ENCODE measurements at regions of chr17 and their contacts with region 1.

Region 1: DNA sequence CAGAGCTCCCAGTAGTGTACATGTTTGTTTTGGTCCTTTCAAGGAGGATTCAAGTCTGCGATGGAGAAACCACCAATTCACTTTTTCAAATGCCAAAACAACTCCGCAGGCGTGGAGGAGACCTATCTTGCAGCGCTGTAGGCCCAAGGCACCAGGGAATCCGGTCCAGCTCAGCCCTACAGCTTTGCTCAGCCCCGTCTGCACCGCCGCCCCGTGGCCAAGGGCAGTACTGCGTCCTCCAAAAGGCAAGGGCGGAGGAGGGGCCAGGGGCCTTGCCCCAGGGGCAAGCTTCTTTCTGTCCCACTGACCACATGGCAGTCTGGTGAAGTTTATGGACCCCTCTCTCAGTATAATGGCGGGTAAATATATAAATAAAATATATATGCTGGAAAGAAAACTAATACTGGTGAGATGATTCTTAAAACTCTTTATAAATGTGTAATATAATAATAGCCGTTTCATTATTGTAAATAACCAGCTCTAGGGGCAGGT is 709 bp upstream of the CD300LG start:
- DNase-seq: peak; percentile 98
- ATAC-seq: peak; percentile 97
- H3K4me3 Mint-ChIP-seq: no peak overlapping the region
- H3K27ac Mint-ChIP-seq: no peak overlapping the region
- H3K4me1 Mint-ChIP-seq: peaks cover 16% of the 10 kb centered on the region
- H3K27me3 Mint-ChIP-seq: peaks cover 5% of the 10 kb centered on the region
- CTCF ChIP-seq: peak; percentile 95

Region 2: GRCh38 chr17:43524945-43525575 is 321.2 kb before region 1 on chr17:
- CTCF ChIA-PET with region 1: no interaction called
- POLR2A ChIA-PET with region 1: no interaction called
- DNase-seq: no peak
- ATAC-seq: no peak
- H3K4me3 Mint-ChIP-seq: no peak overlapping the region
- H3K27ac Mint-ChIP-seq: peak overlapping the region; percentile 80; the same call in 1 of the 2 replicates
- H3K4me1 Mint-ChIP-seq: peaks cover 49% of the 10 kb centered on the region
- H3K27me3 Mint-ChIP-seq: no peaks in the 10 kb centered on the region
- CTCF ChIP-seq: no peak

Region 3: GRCh38 chr17:43760254-43760852 is 85.9 kb before region 1 on chr17:
- CTCF ChIA-PET with region 1: interaction called, 41 read pairs
- POLR2A ChIA-PET with region 1: no interaction called
- DNase-seq: peak; percentile 99
- ATAC-seq: peak; percentile 81
- H3K4me3 Mint-ChIP-seq: peak overlapping the region; percentile 28
- H3K27ac Mint-ChIP-seq: no peak overlapping the region
- H3K4me1 Mint-ChIP-seq: peaks cover 36% of the 10 kb centered on the region
- H3K27me3 Mint-ChIP-seq: peaks cover 18% of the 10 kb centered on the region
- CTCF ChIP-seq: peak; percentile 94

Region 4: GRCh38 chr17:43791589-43791988 is 54.7 kb before region 1 on chr17:
- CTCF ChIA-PET with region 1: interaction called, 66 read pairs
- POLR2A ChIA-PET with region 1: interaction called, 3 read pairs
- DNase-seq: no peak
- ATAC-seq: peak; percentile 80
- H3K4me3 Mint-ChIP-seq: peak overlapping the region; percentile 32; the same call in 1 of the 2 replicates
- H3K27ac Mint-ChIP-seq: no peak overlapping the region
- H3K4me1 Mint-ChIP-seq: peaks cover 8% of the 10 kb centered on the region
- H3K27me3 Mint-ChIP-seq: peaks cover 27% of the 10 kb centered on the region
- CTCF ChIP-seq: no peak

Region 5: DNA sequence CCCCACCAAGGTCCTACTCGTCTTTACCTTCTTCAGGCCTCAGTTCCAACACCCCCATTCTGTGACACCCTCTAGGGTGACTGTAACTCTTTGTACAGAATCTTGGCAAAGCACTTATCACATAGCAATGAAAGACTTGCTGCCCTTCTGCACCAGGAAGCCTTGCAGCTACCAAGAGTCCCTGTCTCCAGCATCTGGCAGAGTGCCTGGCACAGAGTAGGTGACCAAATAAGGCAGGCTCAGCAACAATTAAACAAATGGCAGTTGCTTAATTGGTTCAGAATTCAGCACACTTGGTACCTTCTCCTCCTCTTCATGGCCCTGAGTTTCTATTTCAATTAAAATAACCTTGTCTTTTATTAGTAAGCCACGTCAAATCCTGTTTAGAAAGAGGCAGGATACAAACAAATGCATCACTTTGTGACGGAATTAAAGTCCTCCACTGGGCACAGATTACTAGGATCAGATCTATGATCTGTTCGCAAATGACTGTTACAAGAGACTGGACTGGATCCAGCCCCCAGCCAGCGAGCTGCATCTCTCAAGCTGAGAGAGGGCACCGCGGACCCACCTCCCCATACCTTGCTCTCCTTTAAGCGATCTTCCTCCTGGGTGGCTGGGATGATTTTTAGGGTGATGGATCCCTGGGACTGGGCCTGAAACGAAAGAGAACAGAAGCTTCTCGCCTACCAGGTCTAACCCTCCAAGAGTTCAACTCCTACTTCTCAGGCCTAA is 22.8 kb before region 1 on chr17:
- CTCF ChIA-PET with region 1: interaction called, 45 read pairs
- POLR2A ChIA-PET with region 1: interaction called, 4 read pairs
- DNase-seq: no peak
- ATAC-seq: no peak
- H3K4me3 Mint-ChIP-seq: no peak overlapping the region
- H3K27ac Mint-ChIP-seq: no peak overlapping the region
- H3K4me1 Mint-ChIP-seq: no peaks in the 10 kb centered on the region
- H3K27me3 Mint-ChIP-seq: no peaks in the 10 kb centered on the region
- CTCF ChIP-seq: no peak

Region 6: DNA sequence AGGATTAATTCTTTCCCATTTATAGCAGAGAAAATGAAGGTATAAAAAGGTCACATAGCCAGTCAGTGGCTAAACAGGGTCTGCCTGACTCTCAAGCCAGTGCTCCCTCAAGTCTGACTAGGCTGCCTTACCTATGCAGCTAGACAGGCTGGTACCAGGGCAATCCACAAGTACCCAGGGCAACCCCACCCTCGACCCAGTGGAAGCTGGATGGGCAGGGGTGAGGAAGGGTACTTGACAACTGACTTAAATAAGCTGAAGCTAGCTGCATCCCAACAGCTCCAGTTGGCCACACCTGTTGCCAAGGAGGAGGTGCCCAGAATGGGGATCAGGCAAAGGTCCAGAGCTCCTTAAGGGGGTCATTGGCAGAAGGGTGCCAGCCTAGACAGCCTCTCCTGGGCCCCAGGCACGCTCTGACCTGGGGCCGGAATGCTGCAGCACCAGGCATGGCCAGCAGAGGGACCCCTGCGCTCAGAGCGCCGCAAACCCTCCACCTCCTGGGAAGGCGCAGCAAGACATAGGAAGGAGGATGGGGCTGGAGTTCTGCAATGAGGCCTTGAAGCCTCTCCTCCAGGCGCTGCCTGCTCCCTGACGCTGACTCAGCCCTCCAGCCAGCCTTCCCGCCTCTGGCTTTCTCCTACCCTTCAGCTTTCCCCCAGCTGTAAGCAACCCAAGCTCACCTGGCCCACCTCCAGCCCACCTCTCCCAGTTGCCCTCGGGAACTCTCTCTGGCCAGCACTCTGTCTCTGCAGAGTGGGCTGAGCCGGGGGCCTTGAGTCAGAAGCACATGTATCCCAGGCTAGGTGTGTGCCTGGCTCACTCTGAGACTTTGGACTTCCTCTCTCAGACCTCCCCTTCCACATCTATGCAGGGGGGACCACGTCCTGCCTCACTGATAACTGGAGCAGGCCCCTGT is 32.3 kb after region 1 on chr17:
- CTCF ChIA-PET with region 1: interaction called, 18 read pairs
- POLR2A ChIA-PET with region 1: interaction called, 3 read pairs
- DNase-seq: peak; percentile 89
- ATAC-seq: peak; percentile 83
- H3K4me3 Mint-ChIP-seq: no peak overlapping the region
- H3K27ac Mint-ChIP-seq: no peak overlapping the region
- H3K4me1 Mint-ChIP-seq: peaks cover 14% of the 10 kb centered on the region
- H3K27me3 Mint-ChIP-seq: no peaks in the 10 kb centered on the region
- CTCF ChIP-seq: peak; percentile 91

Region 7: DNA sequence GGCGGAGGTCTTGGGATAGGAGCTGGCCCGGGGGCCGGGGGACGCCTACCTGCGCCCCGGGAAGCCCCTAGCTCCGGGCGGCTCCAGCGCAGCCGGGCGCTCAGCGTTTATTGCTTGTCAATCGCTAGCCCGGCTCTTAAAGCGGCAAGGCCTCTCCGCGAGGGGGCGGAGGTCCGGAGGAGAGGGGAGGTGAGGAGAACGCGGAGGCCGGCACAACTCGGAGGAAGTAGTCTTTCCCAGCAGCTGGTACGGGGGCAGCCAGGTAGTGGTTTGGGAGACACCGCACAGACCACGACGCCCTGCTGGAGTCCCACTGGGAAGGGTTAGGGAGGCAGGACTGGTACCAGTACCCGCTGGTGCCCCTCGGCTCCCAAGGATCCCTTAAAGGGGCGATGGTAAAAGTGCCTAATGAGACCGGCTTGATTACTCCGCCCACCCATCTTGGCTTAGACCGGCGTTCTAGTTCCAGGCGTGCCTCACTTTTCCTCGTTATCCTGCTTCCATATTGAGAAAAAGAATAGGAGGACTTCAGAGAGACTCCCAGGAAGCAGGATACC is 61.2 kb after region 1 on chr17 and contains the start of gene MPP2:
- CTCF ChIA-PET with region 1: interaction called, 17 read pairs
- POLR2A ChIA-PET with region 1: no interaction called
- DNase-seq: peak; percentile 88
- ATAC-seq: peak; percentile 16
- H3K4me3 Mint-ChIP-seq: peak within 1 kb of the TSS; percentile 90
- H3K27ac Mint-ChIP-seq: no peak within 1 kb of the TSS
- H3K4me1 Mint-ChIP-seq: peaks cover 26% of the 10 kb centered on the region
- H3K27me3 Mint-ChIP-seq: peaks cover 49% of the 10 kb centered on the region
- CTCF ChIP-seq: no peak
- total RNA-seq, gene MPP2: 29.3 to 31.4 TPM (median 29.9 TPM) in 3 replicates

Region 8: DNA sequence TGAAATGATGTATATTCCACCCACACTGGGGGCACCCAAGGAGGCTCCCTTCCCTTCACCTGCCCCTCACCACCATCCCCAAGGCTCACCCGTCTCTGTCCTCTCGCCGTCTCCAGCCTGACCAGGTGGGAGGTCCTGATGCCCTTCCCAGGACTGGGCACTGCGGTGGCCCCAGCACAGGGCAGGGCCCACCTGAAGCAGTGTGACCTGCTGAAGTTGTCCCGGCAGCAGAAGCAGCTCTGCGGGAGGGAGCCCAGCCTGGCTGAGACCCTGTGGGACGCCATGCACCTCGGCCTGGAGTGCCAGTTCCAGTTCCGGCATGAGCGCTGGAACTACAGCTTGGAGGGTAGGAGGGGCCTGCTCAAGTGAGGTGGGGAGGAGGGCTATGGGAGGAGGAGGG is 86.1 kb after region 1 on chr17:
- CTCF ChIA-PET with region 1: no interaction called
- POLR2A ChIA-PET with region 1: no interaction called
- DNase-seq: no peak
- ATAC-seq: no peak
- H3K4me3 Mint-ChIP-seq: no peak overlapping the region
- H3K27ac Mint-ChIP-seq: no peak overlapping the region
- H3K4me1 Mint-ChIP-seq: peaks cover 11% of the 10 kb centered on the region
- H3K27me3 Mint-ChIP-seq: peaks cover 43% of the 10 kb centered on the region
- CTCF ChIP-seq: no peak

Region 9: GRCh38 chr17:44095642-44096496 is 249.6 kb after region 1 on chr17:
- CTCF ChIA-PET with region 1: no interaction called
- POLR2A ChIA-PET with region 1: no interaction called
- DNase-seq: peak; percentile 85
- ATAC-seq: peak; percentile 86
- H3K4me3 Mint-ChIP-seq: peak overlapping the region; percentile 73
- H3K27ac Mint-ChIP-seq: peak overlapping the region; percentile 99
- H3K4me1 Mint-ChIP-seq: peaks cover 36% of the 10 kb centered on the region
- H3K27me3 Mint-ChIP-seq: no peaks in the 10 kb centered on the region
- CTCF ChIP-seq: no peak